Psoas muscle (tissue), 8 donors: ENCODE measurements at regions of chr18 and their contacts with region 1.

Region 1: DNA sequence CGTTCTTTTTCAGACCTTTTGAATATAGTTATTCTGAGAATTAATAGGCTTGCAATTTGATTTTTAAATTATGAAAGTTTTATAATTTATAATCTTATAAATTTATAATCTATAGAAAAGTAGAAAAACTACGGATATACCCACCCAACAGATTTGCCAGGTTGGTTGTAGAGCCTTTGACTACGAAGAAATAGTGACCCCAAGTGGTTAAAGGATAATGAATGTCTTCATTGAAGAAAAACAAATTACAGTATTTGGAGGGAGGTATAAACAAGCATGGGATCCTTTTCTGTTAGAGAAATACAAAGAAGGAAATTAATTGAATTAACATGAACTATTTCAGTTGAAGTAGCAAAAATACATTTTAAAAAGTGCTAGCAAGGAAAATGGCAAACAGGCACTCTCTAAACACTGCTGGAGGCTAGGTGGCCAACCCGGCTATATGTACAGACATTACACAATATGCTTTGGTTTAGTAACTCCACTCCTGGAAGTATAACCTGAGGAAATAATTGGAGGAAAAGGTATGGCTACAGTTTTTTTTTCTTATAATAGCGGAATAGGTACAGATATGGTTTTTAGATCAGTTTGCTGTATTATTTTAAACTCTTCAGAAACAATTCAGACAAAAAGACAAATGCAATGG is 110.9 kb downstream of the MIB1 start:
- DNase-seq: no peak
- ATAC-seq: peak in 3 of 4 donors; percentile 47 to 89 (median 78)
- H3K4me3 ChIP-seq: peak overlapping the region; percentile 51
- H3K27ac ChIP-seq: no peak overlapping the region
- H3K4me1 ChIP-seq: peaks cover 17% of the 10 kb centered on the region
- H3K27me3 ChIP-seq: no peaks in the 10 kb centered on the region
- CTCF ChIP-seq: peak; percentile 65

Region 2: DNA sequence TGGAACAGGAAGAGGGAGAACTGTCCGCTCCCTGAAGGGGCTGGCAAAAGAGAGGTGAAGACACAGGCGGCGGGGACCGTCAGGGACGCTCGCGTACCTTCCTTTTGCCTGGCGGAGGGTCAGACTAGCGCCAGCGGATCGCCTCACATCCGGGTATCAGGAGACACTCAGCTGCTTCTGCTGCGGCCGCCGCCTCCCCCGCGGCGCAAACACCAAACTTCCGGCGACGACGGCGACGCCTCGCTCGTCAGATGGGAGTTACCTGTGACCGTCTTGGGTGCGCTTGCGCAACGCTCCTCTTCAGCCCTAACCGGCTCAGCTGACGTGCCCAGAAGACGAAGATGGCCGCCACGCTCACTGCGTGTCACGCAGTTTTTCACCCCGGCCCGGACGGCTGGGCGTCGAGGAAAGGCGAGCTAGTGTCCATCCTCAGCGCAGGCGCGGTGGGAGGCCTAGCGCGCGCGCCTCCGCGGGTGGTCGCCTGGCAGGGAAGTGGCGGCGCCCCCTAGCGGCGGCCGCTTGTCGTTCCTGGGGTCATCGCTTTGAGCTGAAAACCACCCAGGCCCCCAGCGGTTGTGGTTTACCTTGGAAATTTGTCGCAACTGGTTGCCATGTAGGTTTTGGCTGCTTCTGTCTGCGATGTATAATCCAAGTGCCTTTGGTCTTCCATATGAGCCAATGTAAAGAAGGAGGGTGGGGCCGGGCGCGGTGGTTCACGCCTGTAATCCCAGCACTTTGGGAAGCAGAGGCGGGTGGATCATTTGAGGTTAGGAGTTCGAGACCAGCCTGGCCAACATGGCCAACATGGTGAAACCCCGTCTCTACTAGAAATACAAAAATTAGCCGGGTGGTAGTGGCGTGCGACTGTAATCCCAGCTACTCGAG is 250.7 kb before region 1 on chr18 and contains the start of gene ESCO1:
- intact Hi-C with region 1: loop called in 1 of 2 experiments (anchors 10 kb)
- DNase-seq: peak; percentile 96 to 98
- ATAC-seq: peak; percentile 90 to 94 (median 92)
- H3K4me3 ChIP-seq: peak within 1 kb of the TSS; percentile 90
- H3K27ac ChIP-seq: peak within 1 kb of the TSS; percentile 99
- H3K4me1 ChIP-seq: peaks cover 7% of the 10 kb centered on the region
- H3K27me3 ChIP-seq: no peaks in the 10 kb centered on the region
- CTCF ChIP-seq: peak; percentile 95
- total RNA-seq, gene ESCO1: 10.3 to 19.3 (median 15.7) TPM

Region 3: DNA sequence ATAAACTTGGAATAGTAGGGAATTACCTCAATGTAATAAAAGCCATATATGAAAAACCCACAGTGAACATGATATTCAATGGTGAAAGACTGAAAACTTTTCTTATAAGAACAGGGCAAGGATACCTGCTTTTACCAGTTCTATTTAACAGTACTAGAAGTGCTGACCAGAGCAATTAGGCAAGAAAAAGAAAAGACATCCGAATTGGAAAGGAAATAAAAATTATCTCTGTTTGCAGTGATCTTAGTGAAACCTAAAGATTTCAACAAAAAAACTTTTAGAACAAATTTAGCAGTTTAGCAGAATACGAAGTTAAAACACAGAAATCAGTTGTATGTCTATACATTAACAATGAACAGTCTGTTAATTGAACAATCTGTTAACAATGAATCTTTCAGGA is 41.7 kb before region 1 on chr18:
- intact Hi-C with region 1: loop called in 1 of 2 experiments (anchors 5 kb)
- DNase-seq: no peak
- ATAC-seq: no peak
- H3K4me3 ChIP-seq: no peak overlapping the region
- H3K27ac ChIP-seq: no peak overlapping the region
- H3K4me1 ChIP-seq: no peaks in the 10 kb centered on the region
- H3K27me3 ChIP-seq: no peaks in the 10 kb centered on the region
- CTCF ChIP-seq: no peak

Region 4: GRCh38 chr18:21820035-21820810 is 31.2 kb before region 1 on chr18:
- intact Hi-C with region 1: loop called (anchors 1 to 2 kb)
- DNase-seq: no peak
- ATAC-seq: peak; percentile 53 to 71 (median 62)
- H3K4me3 ChIP-seq: no peak overlapping the region
- H3K27ac ChIP-seq: peak overlapping the region; percentile 86
- H3K4me1 ChIP-seq: no peaks in the 10 kb centered on the region
- H3K27me3 ChIP-seq: no peaks in the 10 kb centered on the region
- CTCF ChIP-seq: peak; percentile 70